Endothelial cell of umbilical vein (primary cell): ENCODE measurements at regions of chr1 and their contacts with region 1.

Region 1: DNA sequence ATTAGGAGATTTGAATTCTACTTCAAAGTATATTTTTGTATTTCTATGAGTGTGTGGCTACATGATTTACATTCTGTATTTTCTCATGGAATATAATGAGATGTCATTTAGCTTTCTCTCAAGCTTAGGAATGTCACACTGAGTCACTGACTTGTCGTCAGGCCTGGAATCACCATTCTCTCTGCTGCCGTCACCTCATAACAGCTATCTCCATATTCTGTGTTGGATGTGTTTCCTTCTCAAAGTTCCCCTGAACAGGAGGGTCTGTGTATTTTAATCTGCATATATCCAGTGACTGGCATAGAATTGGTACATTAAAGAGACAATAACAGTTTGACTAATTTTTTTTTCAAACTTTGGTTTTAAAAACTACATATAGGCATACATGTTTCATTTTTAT is 35.9 kb downstream of the LYPLAL1 start:
- DNase-seq: no peak
- H3K4me3 ChIP-seq: no peak overlapping the region
- H3K27ac ChIP-seq: no peak overlapping the region
- H3K4me1 ChIP-seq: no peaks in the 10 kb centered on the region
- H3K27me3 ChIP-seq: no peaks in the 10 kb centered on the region
- CTCF ChIP-seq: no peak
- POLR2A ChIP-seq: no peak

Region 2: GRCh38 chr1:219109424-219110018 is 100.1 kb before region 1 on chr1:
- CTCF ChIA-PET with region 1: no interaction called
- POLR2A ChIA-PET with region 1: no interaction called
- dilution Hi-C with region 1: no loop called
- intact Hi-C with region 1: no loop called
- DNase-seq: no peak
- H3K4me3 ChIP-seq: no peak overlapping the region
- H3K27ac ChIP-seq: no peak overlapping the region
- H3K4me1 ChIP-seq: no peaks in the 10 kb centered on the region
- H3K27me3 ChIP-seq: peaks cover 0 to 2% of the 10 kb centered on the region in 2 experiments
- CTCF ChIP-seq: no peak
- POLR2A ChIP-seq: no peak

Region 3: DNA sequence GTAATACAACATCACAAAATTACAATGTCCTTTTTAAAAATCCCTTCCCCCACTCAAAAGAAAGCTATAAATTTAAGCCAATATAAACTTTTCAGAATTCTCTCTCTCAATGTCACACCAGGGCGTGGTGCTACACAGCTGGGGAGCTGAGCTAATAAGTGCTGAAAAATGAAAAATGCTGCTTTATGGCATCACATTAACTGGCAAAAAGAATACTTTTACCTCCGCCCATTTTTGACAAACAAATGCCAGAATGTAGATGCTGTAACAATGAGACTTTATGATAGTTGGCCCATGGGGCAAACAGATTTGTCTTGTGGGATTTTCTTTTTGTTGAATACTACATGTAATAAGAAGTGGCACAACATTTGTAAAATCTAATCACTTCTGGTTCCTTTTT is 48.6 kb before region 1 on chr1:
- CTCF ChIA-PET with region 1: no interaction called
- POLR2A ChIA-PET with region 1: no interaction called
- dilution Hi-C with region 1: no loop called
- intact Hi-C with region 1: no loop called
- DNase-seq: no peak
- H3K4me3 ChIP-seq: no peak overlapping the region
- H3K27ac ChIP-seq: no peak overlapping the region
- H3K4me1 ChIP-seq: no peaks in the 10 kb centered on the region
- H3K27me3 ChIP-seq: no peaks in the 10 kb centered on the region
- CTCF ChIP-seq: no peak
- POLR2A ChIP-seq: no peak

Region 4: GRCh38 chr1:219173758-219174588 is 35.6 kb before region 1 on chr1 and contains the start of gene LYPLAL1:
- CTCF ChIA-PET with region 1: no interaction called
- POLR2A ChIA-PET with region 1: no interaction called
- dilution Hi-C with region 1: no loop called
- intact Hi-C with region 1: no loop called
- DNase-seq: peak; percentile 92
- H3K4me3 ChIP-seq: peak within 1 kb of the TSS; percentile 78 to 90 (median 86)
- H3K27ac ChIP-seq: peak within 1 kb of the TSS; percentile 80
- H3K4me1 ChIP-seq: peaks cover 15% of the 10 kb centered on the region
- H3K27me3 ChIP-seq: no peaks in the 10 kb centered on the region
- CTCF ChIP-seq: peak in 1 of 2 donors; percentile 7
- POLR2A ChIP-seq: peak; percentile 97
- total RNA-seq, gene LYPLAL1: 19.1 and 25.4 TPM in 2 replicates

Region 5: GRCh38 chr1:219324629-219325367 is 115.2 kb after region 1 on chr1:
- CTCF ChIA-PET with region 1: no interaction called
- POLR2A ChIA-PET with region 1: no interaction called
- dilution Hi-C with region 1: no loop called
- intact Hi-C with region 1: loop called (anchors 5 kb)
- DNase-seq: peak; percentile 83
- H3K4me3 ChIP-seq: no peak overlapping the region
- H3K27ac ChIP-seq: peak overlapping the region; percentile 78
- H3K4me1 ChIP-seq: peaks cover 44% of the 10 kb centered on the region
- H3K27me3 ChIP-seq: no peaks in the 10 kb centered on the region
- CTCF ChIP-seq: no peak
- POLR2A ChIP-seq: peak; percentile 63

Region 6: GRCh38 chr1:219416594-219417238 is 207.1 kb after region 1 on chr1:
- CTCF ChIA-PET with region 1: interaction called, 3 read pairs
- POLR2A ChIA-PET with region 1: no interaction called
- dilution Hi-C with region 1: no loop called
- intact Hi-C with region 1: loop called (anchors 1 kb)
- DNase-seq: peak; percentile 71
- H3K4me3 ChIP-seq: no peak overlapping the region
- H3K27ac ChIP-seq: no peak overlapping the region
- H3K4me1 ChIP-seq: no peaks in the 10 kb centered on the region
- H3K27me3 ChIP-seq: no peaks in the 10 kb centered on the region
- CTCF ChIP-seq: peak; percentile 62 to 75
- POLR2A ChIP-seq: no peak

Region 7: GRCh38 chr1:219518168-219518907 is 308.8 kb after region 1 on chr1:
- CTCF ChIA-PET with region 1: no interaction called
- POLR2A ChIA-PET with region 1: no interaction called
- dilution Hi-C with region 1: no loop called
- intact Hi-C with region 1: no loop called
- DNase-seq: no peak
- H3K4me3 ChIP-seq: no peak overlapping the region
- H3K27ac ChIP-seq: no peak overlapping the region
- H3K4me1 ChIP-seq: no peaks in the 10 kb centered on the region
- H3K27me3 ChIP-seq: no peaks in the 10 kb centered on the region
- CTCF ChIP-seq: no peak
- POLR2A ChIP-seq: no peak

Region 8: GRCh38 chr1:219566951-219567947 is 357.7 kb after region 1 on chr1:
- CTCF ChIA-PET with region 1: no interaction called
- POLR2A ChIA-PET with region 1: no interaction called
- dilution Hi-C with region 1: no loop called
- intact Hi-C with region 1: loop called (anchors 2 kb)
- DNase-seq: peak; percentile 45
- H3K4me3 ChIP-seq: no peak overlapping the region
- H3K27ac ChIP-seq: no peak overlapping the region
- H3K4me1 ChIP-seq: no peaks in the 10 kb centered on the region
- H3K27me3 ChIP-seq: peaks cover 0 to 3% of the 10 kb centered on the region in 2 experiments
- CTCF ChIP-seq: peak; percentile 19 to 32
- POLR2A ChIP-seq: no peak

Region 9: DNA sequence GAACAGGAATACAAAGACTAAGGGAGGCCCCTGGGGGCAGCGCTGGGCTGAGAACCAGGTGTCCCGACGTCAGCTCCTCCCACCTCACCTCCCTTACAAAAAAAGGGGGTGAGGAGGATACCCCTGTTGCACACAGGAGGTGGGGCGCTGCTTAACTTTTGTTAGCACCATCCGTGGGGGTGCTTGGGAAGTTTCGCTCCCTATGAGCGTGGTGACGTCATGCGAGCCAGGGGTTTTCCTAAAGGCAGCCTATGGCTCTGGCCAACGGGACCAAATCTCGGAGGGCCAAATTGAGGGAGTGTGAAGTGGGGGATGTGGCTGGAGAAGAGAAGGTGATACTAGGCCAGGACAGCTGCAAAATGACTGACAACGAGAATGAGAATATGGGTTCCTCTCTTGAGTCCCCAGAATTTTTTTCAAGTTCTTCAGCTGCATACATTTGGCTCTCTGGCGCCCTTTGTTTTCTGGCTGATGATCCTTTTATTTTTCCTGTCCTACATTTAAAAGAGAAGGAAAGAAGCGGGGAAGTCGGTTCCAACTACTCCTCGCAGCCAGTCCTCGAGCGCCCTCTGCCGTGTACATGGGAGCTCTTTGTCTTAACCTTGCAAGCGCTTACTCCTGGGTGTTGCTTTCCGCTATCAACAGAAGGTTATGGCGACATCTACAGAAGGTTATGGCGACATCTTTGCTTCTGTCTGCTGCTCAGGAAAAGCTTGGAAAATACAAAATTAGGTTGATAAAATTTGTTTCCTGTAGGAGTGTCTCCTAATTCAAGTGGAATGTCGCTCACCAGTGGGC is 451.3 kb after region 1 on chr1:
- CTCF ChIA-PET with region 1: no interaction called
- POLR2A ChIA-PET with region 1: no interaction called
- dilution Hi-C with region 1: no loop called
- intact Hi-C with region 1: loop called (anchors 2 kb)
- DNase-seq: peak; percentile 84
- H3K4me3 ChIP-seq: peak overlapping the region in 2 of 3 experiments; percentile 24 to 49
- H3K27ac ChIP-seq: no peak overlapping the region
- H3K4me1 ChIP-seq: peaks cover 2% of the 10 kb centered on the region
- H3K27me3 ChIP-seq: peaks cover 0 to 9% of the 10 kb centered on the region in 2 experiments
- CTCF ChIP-seq: peak; percentile 82 to 86
- POLR2A ChIP-seq: no peak